Activated B cell treated with CpG ODN at 0.5 μM for 24 hours (primary cell): ENCODE measurements at regions of chr6 and their contacts with region 1.

Region 1: DNA sequence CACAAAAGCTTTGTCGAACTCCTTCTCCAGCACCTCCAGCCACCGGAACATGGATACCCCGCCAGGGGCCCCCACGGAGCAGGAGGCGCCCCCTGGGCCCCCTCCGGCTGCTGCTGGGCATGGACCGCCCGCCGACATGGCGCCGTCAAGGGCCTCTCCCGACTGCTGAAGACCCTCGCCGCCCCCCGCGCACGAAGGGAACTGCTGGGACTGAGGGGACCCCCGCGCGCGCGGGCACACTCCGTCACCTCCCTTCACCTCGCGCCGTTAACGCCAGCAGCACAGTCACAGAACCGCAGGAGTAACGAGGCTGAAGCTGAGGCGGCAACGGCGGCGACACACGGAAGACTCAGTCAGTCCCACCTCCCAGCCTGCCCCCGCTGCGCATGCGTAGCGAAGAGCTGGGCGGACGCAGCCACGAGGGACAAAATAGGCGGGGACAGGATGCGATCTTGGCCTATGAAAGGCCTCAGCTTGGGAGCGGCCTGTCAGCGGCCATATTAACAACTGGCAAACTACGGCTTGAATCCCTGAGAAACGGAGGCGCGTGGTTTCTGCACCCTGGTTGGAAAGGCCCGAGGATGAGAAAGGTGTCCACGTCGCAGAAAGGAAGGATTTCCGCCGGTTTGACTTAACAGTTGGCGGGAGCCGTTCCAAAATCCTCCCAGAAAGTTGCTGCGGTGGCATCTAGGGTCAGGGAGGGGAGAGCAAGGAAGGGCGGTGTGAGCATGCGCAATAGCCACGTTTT is at the start of gene GOPC:
- DNase-seq: peak; percentile 85
- ATAC-seq: peak; percentile 96
- H3K4me3 Mint-ChIP-seq: peak within 1 kb of the TSS; percentile 100
- H3K27ac Mint-ChIP-seq: peak within 1 kb of the TSS; percentile 99
- H3K4me1 Mint-ChIP-seq: peaks cover 46% of the 10 kb centered on the region
- H3K27me3 Mint-ChIP-seq: no peaks in the 10 kb centered on the region
- CTCF ChIP-seq: no peak
- total RNA-seq, gene GOPC: 17.1 and 19.5 TPM in 2 replicates

Region 2: DNA sequence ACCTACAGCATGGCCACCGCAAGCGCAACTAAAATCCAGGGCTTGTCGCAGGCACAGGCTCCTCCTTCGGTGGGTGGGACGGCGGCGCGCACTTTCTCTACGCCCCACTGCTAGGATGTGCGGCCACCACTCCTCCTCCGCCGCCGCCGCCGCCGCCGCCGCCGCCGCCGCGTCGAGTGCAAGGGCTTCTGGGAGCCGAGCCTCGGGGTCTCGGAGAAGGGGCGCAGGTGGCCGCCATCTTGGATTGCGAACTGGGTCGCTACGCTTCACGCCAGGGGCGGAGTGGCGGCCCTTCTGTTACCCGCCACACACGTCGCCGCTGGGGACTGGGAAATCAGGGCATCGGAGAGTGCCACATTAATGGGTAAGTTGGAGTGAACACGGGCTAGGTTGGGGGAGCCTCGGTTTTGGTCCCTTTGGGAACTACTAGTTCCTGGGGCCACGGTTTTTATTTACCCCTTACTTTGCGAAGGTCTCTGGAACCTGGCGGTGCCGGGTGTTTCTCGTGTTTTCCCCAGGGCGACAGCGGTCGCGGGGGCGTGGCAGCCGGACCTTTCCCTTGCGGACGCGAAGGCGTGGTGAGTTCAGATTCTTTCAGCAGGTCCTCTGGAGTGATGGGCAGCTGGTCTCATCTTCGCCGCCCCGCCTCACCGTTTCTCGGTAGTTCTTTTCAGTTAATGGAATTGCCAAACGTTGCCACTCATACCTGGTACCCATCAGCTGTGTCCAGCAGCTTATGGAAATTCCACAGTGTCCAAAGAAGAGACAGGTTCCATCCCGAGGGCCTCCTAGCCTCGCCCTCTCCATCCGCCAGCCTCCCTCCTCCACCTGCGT is 921.1 kb before region 1 on chr6 and contains the start of gene KPNA5:
- CTCF ChIA-PET with region 1: no interaction called
- POLR2A ChIA-PET with region 1: no interaction called
- intact Hi-C with region 1: loop called (anchors 5 kb)
- DNase-seq: peak; percentile 89
- ATAC-seq: peak; percentile 92
- H3K4me3 Mint-ChIP-seq: peak within 1 kb of the TSS; percentile 99
- H3K27ac Mint-ChIP-seq: peak within 1 kb of the TSS; percentile 99
- H3K4me1 Mint-ChIP-seq: peaks cover 40% of the 10 kb centered on the region
- H3K27me3 Mint-ChIP-seq: no peaks in the 10 kb centered on the region
- CTCF ChIP-seq: no peak
- total RNA-seq, gene KPNA5: 25.0 and 29.9 TPM in 2 replicates

Region 3: DNA sequence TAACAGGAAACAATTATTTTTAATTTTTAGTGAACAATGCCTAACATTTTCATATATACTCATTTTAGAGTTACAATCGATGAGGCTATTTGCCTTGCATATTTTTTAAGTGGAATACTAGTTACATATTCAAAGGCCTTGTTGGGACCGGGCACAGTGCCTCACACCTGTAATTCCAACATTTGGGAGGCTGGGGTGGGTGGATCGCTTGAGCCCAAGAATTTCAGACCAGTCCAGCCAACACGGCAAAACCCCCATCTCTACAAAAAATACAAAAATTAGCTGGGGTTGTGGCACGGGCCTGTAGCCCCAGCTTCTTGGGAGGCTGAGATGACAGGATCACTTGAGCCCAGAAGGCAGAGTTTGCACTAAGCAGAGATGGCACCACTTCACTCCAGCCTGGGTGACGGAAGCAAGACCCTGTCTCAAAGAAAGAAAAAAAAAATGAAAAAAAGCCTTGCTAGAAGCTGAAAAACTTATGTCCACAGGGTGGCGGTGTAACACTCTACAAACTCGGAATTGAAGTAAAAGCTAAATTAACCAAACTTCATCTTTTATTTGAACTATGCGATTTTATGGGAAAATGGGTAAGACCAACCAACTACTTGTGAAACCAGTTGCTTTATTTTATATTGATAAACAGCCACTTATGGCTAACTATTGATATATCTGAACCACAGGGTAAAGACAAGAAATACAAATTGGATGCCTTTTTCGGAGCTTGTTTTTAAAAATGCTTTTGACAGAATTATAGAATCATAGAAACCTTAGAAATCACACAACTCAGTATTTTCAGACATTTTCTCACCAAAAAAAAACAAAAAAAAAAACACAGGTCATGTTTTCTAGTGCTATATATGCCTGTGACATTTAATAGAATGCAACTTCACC is 152.5 kb before region 1 on chr6:
- CTCF ChIA-PET with region 1: interaction called, 61 read pairs
- POLR2A ChIA-PET with region 1: interaction called, 3 read pairs
- intact Hi-C with region 1: loop called (anchors 1 kb)
- DNase-seq: no peak
- ATAC-seq: peak; percentile 34
- H3K4me3 Mint-ChIP-seq: no peak overlapping the region
- H3K27ac Mint-ChIP-seq: no peak overlapping the region
- H3K4me1 Mint-ChIP-seq: no peaks in the 10 kb centered on the region
- H3K27me3 Mint-ChIP-seq: peaks cover 17% of the 10 kb centered on the region
- CTCF ChIP-seq: no peak

Region 4: GRCh38 chr6:117585647-117586046 is 16.7 kb before region 1 on chr6:
- CTCF ChIA-PET with region 1: no interaction called
- POLR2A ChIA-PET with region 1: no interaction called
- intact Hi-C with region 1: loop called (anchors 2 kb)
- DNase-seq: no peak
- ATAC-seq: no peak
- H3K4me3 Mint-ChIP-seq: no peak overlapping the region
- H3K27ac Mint-ChIP-seq: no peak overlapping the region
- H3K4me1 Mint-ChIP-seq: peaks cover 5% of the 10 kb centered on the region
- H3K27me3 Mint-ChIP-seq: no peaks in the 10 kb centered on the region
- CTCF ChIP-seq: no peak

Region 5: GRCh38 chr6:117629119-117629518 is 26.8 kb after region 1 on chr6:
- CTCF ChIA-PET with region 1: no interaction called
- POLR2A ChIA-PET with region 1: no interaction called
- intact Hi-C with region 1: no loop called
- DNase-seq: no peak
- ATAC-seq: no peak
- H3K4me3 Mint-ChIP-seq: no peak overlapping the region
- H3K27ac Mint-ChIP-seq: no peak overlapping the region
- H3K4me1 Mint-ChIP-seq: no peaks in the 10 kb centered on the region
- H3K27me3 Mint-ChIP-seq: peaks cover 9% of the 10 kb centered on the region
- CTCF ChIP-seq: no peak

Region 6: DNA sequence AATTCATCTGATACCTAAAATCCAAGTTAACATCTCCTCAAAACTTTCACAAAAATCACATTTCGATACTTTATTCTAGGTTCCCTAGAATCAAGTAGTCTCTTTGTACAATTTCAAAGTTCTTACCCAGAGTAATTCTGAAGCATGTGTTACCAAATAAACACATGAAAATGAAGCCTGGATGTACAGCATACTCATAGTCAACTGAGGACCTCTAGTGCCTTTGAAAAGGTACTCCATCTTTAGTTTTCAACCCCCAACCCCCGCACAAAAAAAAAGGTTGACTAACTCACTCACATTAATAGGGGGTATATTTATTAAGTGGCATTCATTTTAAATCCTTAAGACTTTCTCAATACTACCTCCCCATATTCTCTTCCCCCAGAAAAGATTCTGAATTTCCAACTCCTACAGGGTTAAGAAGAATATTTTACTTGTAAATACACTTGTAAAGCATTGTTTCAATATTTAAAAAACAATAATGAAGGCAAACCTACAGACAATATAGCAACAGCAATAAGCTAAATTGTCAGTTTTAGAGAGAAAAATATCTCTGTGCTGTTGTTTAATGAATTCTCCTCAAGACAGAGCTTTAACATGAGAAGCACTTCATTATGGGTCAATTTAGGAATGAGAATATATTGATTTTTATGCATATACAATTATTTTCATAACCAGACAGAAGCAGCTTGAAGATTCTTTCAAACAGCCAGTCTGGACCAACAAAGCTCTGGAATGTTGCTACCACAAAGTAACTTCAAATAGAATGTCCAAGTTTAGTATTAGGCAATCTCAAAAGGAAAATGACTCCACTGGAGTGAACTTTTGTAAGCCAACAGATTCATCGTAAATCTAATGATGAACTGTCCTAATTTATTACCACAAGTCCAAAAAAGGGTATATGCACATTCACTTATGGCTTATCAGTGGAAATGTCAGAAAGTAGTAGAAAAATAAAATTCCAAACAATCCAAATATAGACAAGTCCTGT is 949.0 kb after region 1 on chr6:
- CTCF ChIA-PET with region 1: no interaction called
- POLR2A ChIA-PET with region 1: no interaction called
- intact Hi-C with region 1: loop called (anchors 10 kb)
- DNase-seq: no peak
- ATAC-seq: peak; percentile 57
- H3K4me3 Mint-ChIP-seq: no peak overlapping the region
- H3K27ac Mint-ChIP-seq: no peak overlapping the region
- H3K4me1 Mint-ChIP-seq: no peaks in the 10 kb centered on the region
- H3K27me3 Mint-ChIP-seq: no peaks in the 10 kb centered on the region
- CTCF ChIP-seq: no peak

Region 7: GRCh38 chr6:118934461-118935330 is 1332.4 kb after region 1 on chr6 and contains the start of gene MCM9:
- CTCF ChIA-PET with region 1: no interaction called
- POLR2A ChIA-PET with region 1: no interaction called
- intact Hi-C with region 1: loop called (anchors 5 kb)
- DNase-seq: peak; percentile 90
- ATAC-seq: peak; percentile 92
- H3K4me3 Mint-ChIP-seq: peak within 1 kb of the TSS; percentile 89
- H3K27ac Mint-ChIP-seq: peak within 1 kb of the TSS; percentile 91
- H3K4me1 Mint-ChIP-seq: peaks cover 32% of the 10 kb centered on the region
- H3K27me3 Mint-ChIP-seq: no peaks in the 10 kb centered on the region
- CTCF ChIP-seq: no peak
- total RNA-seq, gene MCM9: 33.3 and 37.0 TPM in 2 replicates